Mammary epithelial cell (primary cell): ENCODE measurements at regions of chr1 and their contacts with region 1.

Region 1: DNA sequence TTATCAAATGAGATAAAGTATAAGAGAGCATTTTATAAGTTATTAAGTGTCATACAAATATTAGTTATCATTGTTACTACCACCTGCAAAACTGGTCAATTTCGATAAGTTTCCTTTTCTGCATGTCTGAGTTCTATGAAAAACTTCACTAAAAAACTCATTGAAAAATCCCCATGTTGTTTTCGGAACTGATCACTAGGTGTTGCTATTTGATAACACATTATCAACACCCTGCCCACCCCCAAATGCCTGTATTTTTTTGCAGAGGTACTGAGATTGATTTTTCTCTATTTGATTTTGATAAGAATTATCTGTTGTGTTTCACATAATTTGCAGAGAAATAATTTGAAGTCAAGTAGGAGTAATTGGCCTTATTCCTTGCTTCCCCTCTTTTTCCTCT is 22.1 kb upstream of the DISP1 start:
- DNase-seq: no peak
- H3K4me3 ChIP-seq: no peak overlapping the region
- H3K27ac ChIP-seq: no peak overlapping the region
- H3K4me1 ChIP-seq: no peaks in the 10 kb centered on the region
- H3K27me3 ChIP-seq: no peaks in the 10 kb centered on the region
- CTCF ChIP-seq: peak; percentile 46 to 51

Region 2: DNA sequence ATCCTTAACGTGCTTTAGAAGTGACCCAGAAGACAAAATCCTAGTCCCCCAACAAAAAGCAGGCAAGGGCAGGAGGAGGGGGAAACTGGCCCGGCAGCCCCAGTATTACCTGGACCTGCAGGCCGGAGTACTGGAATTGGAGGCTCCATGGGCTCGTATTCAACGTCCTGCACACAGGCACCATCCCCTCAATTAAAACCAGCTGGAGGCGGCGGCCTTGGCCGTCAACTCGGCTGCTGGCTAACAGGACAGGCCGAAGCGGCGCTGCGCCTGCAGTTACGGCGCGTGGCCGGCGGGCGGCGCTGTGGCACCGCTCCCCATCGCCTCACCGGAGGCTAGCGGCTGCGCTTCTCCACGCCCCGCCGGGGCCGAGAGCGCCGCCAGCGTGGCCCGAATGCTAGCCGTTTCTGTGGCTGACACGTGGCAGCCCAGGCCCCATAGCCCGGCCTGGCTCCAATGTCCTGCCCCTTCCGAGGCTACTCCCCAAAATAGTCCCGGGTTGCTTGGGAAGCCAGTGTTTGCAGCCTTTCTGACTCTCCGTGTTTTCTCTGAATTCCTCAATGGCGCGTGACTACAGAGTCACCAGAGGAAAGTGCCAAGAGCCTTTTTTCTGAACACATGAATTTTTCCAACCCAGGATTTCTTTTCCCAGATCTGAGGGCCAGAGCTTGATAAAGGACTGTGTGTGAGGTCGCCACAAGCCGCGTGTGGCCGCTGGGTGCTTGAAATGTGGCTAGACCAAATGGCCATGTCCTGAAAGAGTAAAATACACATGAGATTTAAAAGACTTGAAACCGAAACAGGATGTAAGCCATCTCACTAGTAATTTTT is 327.3 kb before region 1 on chr1:
- CTCF ChIA-PET with region 1: no interaction called
- dilution Hi-C with region 1: no loop called
- in situ Hi-C with region 1: no loop called
- intact Hi-C with region 1: loop called (anchors 1 kb)
- DNase-seq: peak; percentile 86
- H3K4me3 ChIP-seq: peak overlapping the region; percentile 30 to 39 (median 36)
- H3K27ac ChIP-seq: peak overlapping the region; percentile 75
- H3K4me1 ChIP-seq: peaks cover 10% of the 10 kb centered on the region
- H3K27me3 ChIP-seq: no peaks in the 10 kb centered on the region
- CTCF ChIP-seq: peak; percentile 91 to 92

Region 3: DNA sequence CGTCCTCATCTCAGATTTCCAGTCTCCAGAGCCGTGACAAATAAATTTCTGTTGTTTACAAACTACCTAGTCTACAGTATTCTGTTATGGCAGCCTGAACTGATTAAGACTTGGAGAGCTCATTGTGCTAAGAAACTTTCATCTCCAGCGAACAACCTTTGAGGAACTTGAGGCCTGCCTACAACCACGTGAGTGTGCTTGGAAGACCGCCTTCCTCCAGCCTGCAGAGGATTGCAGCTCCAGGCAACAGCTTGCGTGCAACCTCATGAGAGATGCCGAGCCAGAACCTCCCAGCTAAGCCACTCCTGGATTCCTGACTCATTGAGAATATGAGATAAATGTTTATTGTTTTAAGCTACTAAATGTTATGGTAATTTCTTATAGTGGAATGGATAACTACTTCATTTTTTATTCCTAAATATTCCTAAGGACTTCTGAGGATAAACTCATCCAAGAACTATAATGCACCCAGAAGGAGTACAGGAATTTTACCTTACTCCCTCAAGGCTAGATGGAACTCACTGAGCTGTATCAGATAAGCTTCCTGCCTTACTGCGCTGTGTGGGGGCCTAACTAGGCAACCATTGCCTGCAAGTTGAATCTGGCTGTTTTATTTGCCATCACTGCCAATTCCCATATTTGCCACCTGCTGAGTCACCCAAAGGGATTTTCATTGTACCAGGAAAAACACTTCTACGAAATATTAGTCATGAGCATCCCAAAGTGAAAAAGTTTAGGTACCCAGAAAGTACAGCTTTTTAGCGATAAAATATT is 38.2 kb before region 1 on chr1:
- CTCF ChIA-PET with region 1: no interaction called
- dilution Hi-C with region 1: loop called (anchors 5 kb)
- in situ Hi-C with region 1: no loop called
- intact Hi-C with region 1: no loop called
- DNase-seq: peak; percentile 85
- H3K4me3 ChIP-seq: no peak overlapping the region
- H3K27ac ChIP-seq: peak overlapping the region; percentile 81
- H3K4me1 ChIP-seq: peaks cover 16% of the 10 kb centered on the region
- H3K27me3 ChIP-seq: no peaks in the 10 kb centered on the region
- CTCF ChIP-seq: no peak

Region 4: GRCh38 chr1:223081181-223081994 is 288.6 kb after region 1 on chr1:
- CTCF ChIA-PET with region 1: no interaction called
- dilution Hi-C with region 1: loop called (anchors 25 kb)
- in situ Hi-C with region 1: loop called in 1 of 2 experiments (anchors 10 kb)
- intact Hi-C with region 1: loop called (anchors 1 kb)
- DNase-seq: peak; percentile 92
- H3K4me3 ChIP-seq: peak overlapping the region in 2 of 3 experiments; percentile 22 to 34
- H3K27ac ChIP-seq: no peak overlapping the region
- H3K4me1 ChIP-seq: peaks cover 3% of the 10 kb centered on the region
- H3K27me3 ChIP-seq: peaks cover 4% of the 10 kb centered on the region
- CTCF ChIP-seq: peak; percentile 65 to 95

Region 5: DNA sequence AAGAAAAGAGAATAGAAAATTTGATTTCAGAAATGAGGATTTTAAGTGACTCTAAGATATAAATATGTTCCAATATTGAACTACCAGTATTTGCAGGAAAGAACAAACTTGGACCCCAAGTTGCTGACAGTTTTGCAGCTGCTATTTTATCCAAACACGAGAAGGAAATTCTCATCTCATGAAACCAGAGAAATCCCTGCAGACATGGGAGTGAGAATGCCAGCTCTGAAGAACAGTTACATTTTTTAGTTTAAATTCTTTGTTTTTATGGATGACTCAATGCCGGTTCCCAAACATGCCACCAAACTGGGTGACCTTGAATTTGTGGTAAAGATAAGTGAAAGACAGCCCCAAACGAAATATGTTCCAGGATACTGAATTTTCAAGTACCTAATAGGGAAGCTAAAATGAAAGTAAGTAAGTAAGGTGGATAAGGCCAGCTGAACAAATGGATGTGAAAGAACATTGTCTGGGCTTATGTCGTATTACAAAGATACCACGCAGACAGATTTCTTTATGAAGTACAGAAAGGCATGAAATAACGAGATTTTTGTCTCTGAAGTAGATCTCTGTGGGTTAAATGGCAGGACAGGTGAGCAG is 330.4 kb after region 1 on chr1:
- CTCF ChIA-PET with region 1: interaction called, 3 read pairs
- dilution Hi-C with region 1: no loop called
- in situ Hi-C with region 1: no loop called
- intact Hi-C with region 1: loop called (anchors 1 kb)
- DNase-seq: no peak
- H3K4me3 ChIP-seq: peak overlapping the region; percentile 22 to 41 (median 37)
- H3K27ac ChIP-seq: no peak overlapping the region
- H3K4me1 ChIP-seq: no peaks in the 10 kb centered on the region
- H3K27me3 ChIP-seq: no peaks in the 10 kb centered on the region
- CTCF ChIP-seq: no peak